Naive thymus-derived CD4-positive, alpha-beta T cell (primary cell): ENCODE measurements at regions of chr1 and their contacts with region 1.

Region 1: DNA sequence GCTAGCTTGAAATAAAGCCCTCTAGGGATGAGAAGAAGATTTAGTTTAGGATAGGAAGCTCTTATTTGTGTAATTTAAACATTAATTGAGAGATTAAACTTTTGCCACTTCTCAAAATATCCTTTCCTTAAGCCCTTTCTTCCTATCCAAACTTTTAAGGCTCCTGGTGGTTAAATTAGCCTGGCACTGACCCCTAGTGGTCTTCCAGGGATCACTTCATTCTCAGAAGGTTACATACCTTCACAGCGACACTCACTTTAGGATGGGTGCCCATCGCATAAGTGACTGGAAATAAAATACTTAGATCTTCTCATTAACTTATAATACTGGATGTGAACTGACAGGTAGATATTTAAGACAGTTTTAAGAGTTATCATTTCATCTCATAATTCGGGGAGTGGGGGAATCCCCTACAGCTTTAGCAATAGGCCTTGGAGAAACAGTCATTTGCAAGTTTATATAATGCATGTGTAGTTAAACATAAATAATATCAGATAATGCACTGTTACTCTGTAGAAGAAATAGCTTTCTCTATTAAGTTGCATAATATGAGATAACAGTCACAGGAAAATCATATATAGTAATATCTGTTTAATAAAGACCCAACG is 7.4 kb downstream of the LHX9 start:
- DNase-seq: peak in 1 of 9 donors; percentile 40
- ATAC-seq: peak; percentile 73
- H3K4me3 ChIP-seq: no peak overlapping the region
- H3K4me3 Mint-ChIP-seq: no peak overlapping the region
- H3K27ac ChIP-seq: no peak overlapping the region
- H3K27ac Mint-ChIP-seq: no peak overlapping the region
- H3K4me1 ChIP-seq: peaks cover 5% of the 10 kb centered on the region in 2 donors
- H3K4me1 Mint-ChIP-seq: peaks cover 17 to 29% (median 23%) of the 10 kb centered on the region in 7 donors
- H3K27me3 ChIP-seq: peaks cover 17 to 32% of the 10 kb centered on the region in 2 donors
- H3K27me3 Mint-ChIP-seq: peaks cover 74 to 95% (median 76%) of the 10 kb centered on the region in 5 donors

Region 2: GRCh38 chr1:197399755-197400527 is 524.7 kb before region 1 on chr1:
- CTCF ChIA-PET with region 1: no interaction called
- POLR2A ChIA-PET with region 1: no interaction called
- intact Hi-C with region 1: loop called in 1 of 2 experiments (anchors 2 kb)
- DNase-seq: peak in 6 of 9 donors; percentile 14 to 51 (median 34)
- ATAC-seq: peak; percentile 88
- H3K4me3 ChIP-seq: no peak overlapping the region
- H3K4me3 Mint-ChIP-seq: peak overlapping the region in 2 of 10 donors; percentile 54 to 64
- H3K27ac ChIP-seq: no peak overlapping the region
- H3K27ac Mint-ChIP-seq: peak overlapping the region in 1 of 9 donors; percentile 28
- H3K4me1 ChIP-seq: no peaks in the 10 kb centered on the region
- H3K4me1 Mint-ChIP-seq: peaks cover 0 to 3% (median 0%) of the 10 kb centered on the region in 7 donors
- H3K27me3 ChIP-seq: no peaks in the 10 kb centered on the region
- H3K27me3 Mint-ChIP-seq: peaks cover 5 to 22% (median 8%) of the 10 kb centered on the region in 5 donors

Region 3: GRCh38 chr1:197526736-197527371 is 397.8 kb before region 1 on chr1:
- CTCF ChIA-PET with region 1: interaction called, 8 read pairs
- POLR2A ChIA-PET with region 1: no interaction called
- intact Hi-C with region 1: loop called in 1 of 2 experiments (anchors 1 kb)
- DNase-seq: peak in 6 of 9 donors; percentile 9 to 53 (median 37)
- ATAC-seq: peak; percentile 69
- H3K4me3 ChIP-seq: no peak overlapping the region
- H3K4me3 Mint-ChIP-seq: no peak overlapping the region
- H3K27ac ChIP-seq: no peak overlapping the region
- H3K27ac Mint-ChIP-seq: no peak overlapping the region
- H3K4me1 ChIP-seq: no peaks in the 10 kb centered on the region
- H3K4me1 Mint-ChIP-seq: no peaks in the 10 kb centered on the region
- H3K27me3 ChIP-seq: no peaks in the 10 kb centered on the region
- H3K27me3 Mint-ChIP-seq: no peaks in the 10 kb centered on the region

Region 4: DNA sequence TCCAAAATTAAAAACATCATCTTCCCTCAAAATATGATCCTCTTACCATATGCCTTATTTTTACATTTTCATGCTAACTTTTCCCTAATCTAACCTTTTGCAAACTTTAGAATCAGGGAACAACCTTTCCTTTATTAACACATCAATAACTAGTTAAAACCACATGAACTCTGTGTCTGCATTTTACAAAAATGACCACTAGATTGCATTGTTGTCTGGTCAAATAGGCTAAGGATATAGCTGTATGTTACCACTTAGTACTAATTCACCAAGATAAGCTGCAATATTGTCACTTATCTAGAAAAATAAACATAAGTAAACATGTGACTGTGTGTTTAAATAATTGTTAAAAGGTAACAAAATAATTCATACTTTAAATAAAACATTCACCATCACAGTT is 231.7 kb before region 1 on chr1:
- CTCF ChIA-PET with region 1: no interaction called
- POLR2A ChIA-PET with region 1: no interaction called
- intact Hi-C with region 1: loop called in 1 of 2 experiments (anchors 1 kb)
- DNase-seq: no peak
- ATAC-seq: no peak
- H3K4me3 ChIP-seq: no peak overlapping the region
- H3K4me3 Mint-ChIP-seq: no peak overlapping the region
- H3K27ac ChIP-seq: no peak overlapping the region
- H3K27ac Mint-ChIP-seq: no peak overlapping the region
- H3K4me1 ChIP-seq: peaks cover 0 to 9% of the 10 kb centered on the region in 2 donors
- H3K4me1 Mint-ChIP-seq: peaks cover 0 to 47% (median 33%) of the 10 kb centered on the region in 7 donors
- H3K27me3 ChIP-seq: no peaks in the 10 kb centered on the region
- H3K27me3 Mint-ChIP-seq: no peaks in the 10 kb centered on the region

Region 5: GRCh38 chr1:197902454-197903195 is 22.0 kb before region 1 on chr1 and contains the start of gene C1orf53:
- CTCF ChIA-PET with region 1: interaction called, 4 read pairs
- POLR2A ChIA-PET with region 1: interaction called, 3 read pairs
- intact Hi-C with region 1: loop called (anchors 1 to 2 kb)
- DNase-seq: peak; percentile 58 to 87 (median 74)
- ATAC-seq: peak; percentile 94
- H3K4me3 ChIP-seq: peak within 1 kb of the TSS; percentile 71
- H3K4me3 Mint-ChIP-seq: peak within 1 kb of the TSS; percentile 79 to 97 (median 92)
- H3K27ac ChIP-seq: peak within 1 kb of the TSS; percentile 50
- H3K27ac Mint-ChIP-seq: peak within 1 kb of the TSS; percentile 7 to 82 (median 79)
- H3K4me1 ChIP-seq: peaks cover 4% of the 10 kb centered on the region in 2 donors
- H3K4me1 Mint-ChIP-seq: peaks cover 6 to 19% (median 14%) of the 10 kb centered on the region in 7 donors
- H3K27me3 ChIP-seq: peaks cover 0 to 23% of the 10 kb centered on the region in 2 donors
- H3K27me3 Mint-ChIP-seq: peaks cover 46 to 68% (median 54%) of the 10 kb centered on the region in 5 donors
- total RNA-seq, gene C1orf53: not detected

Region 6: GRCh38 chr1:198465201-198466144 is 540.9 kb after region 1 on chr1:
- CTCF ChIA-PET with region 1: no interaction called
- POLR2A ChIA-PET with region 1: no interaction called
- intact Hi-C with region 1: loop called (anchors 1 kb)
- DNase-seq: peak in 6 of 9 donors; percentile 3 to 57 (median 40)
- ATAC-seq: peak; percentile 71
- H3K4me3 ChIP-seq: no peak overlapping the region
- H3K4me3 Mint-ChIP-seq: no peak overlapping the region
- H3K27ac ChIP-seq: no peak overlapping the region
- H3K27ac Mint-ChIP-seq: no peak overlapping the region
- H3K4me1 ChIP-seq: no peaks in the 10 kb centered on the region
- H3K4me1 Mint-ChIP-seq: peaks cover 0 to 5% (median 0%) of the 10 kb centered on the region in 7 donors
- H3K27me3 ChIP-seq: no peaks in the 10 kb centered on the region
- H3K27me3 Mint-ChIP-seq: no peaks in the 10 kb centered on the region